CD4-positive, alpha-beta T cell (primary cell): ENCODE measurements at regions of chr5 and their contacts with region 1.

Region 1: DNA sequence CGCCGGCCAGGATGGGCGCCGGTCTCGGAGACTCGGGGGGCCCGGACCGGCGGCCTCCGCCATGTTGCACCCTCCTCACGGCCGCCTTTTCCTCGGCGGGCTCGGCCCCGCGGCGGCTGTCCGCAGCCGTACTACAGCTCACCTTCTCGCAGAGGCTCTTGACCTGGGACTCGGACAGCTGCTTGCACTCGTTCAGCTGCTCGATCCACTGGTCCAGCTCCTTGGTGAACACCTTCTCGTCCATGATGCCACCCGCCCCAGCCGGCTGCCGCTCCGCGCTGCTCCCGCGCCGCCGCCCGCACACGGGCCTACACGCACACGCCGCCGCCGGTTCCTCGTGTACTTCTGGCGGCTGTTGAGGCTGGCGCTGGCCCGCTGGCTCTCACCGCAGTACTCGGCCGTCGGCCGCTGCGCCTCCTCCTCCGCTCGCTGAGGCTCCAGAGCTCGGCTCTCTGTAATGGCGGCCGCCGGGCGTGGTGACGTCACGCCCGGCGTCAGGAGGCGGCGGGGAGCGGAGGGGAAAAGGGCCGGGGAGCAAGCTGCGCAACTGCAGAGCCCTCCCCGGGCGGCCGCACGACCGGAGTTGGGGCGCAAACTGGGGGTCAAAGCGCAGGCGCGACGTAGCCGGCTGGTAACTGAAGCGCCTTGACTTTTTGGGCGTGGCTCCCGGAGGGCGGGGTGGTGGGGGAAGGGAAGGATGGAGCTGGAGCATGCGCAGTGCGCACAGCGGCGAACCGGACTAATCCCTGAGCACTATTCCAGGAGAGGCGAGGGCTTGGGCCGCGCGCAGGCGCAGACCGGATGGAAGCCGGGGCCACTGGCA is at the start of gene PPP2CA:
- DNase-seq: peak; percentile 98 to 100 (median 99)
- ATAC-seq: peak; percentile 76
- H3K4me3 ChIP-seq: peak within 1 kb of the TSS; percentile 75
- H3K4me3 Mint-ChIP-seq: peak within 1 kb of the TSS; percentile 99
- H3K27ac ChIP-seq: peak within 1 kb of the TSS; percentile 100
- H3K27ac Mint-ChIP-seq: peak within 1 kb of the TSS; percentile 100
- H3K4me1 ChIP-seq: peaks cover 23% of the 10 kb centered on the region
- H3K4me1 Mint-ChIP-seq: peaks cover 65% of the 10 kb centered on the region
- H3K27me3 ChIP-seq: no peaks in the 10 kb centered on the region
- H3K27me3 Mint-ChIP-seq: no peaks in the 10 kb centered on the region
- CTCF ChIP-seq: no peak
- total RNA-seq, gene PPP2CA: 188 to 195 TPM

Region 2: DNA sequence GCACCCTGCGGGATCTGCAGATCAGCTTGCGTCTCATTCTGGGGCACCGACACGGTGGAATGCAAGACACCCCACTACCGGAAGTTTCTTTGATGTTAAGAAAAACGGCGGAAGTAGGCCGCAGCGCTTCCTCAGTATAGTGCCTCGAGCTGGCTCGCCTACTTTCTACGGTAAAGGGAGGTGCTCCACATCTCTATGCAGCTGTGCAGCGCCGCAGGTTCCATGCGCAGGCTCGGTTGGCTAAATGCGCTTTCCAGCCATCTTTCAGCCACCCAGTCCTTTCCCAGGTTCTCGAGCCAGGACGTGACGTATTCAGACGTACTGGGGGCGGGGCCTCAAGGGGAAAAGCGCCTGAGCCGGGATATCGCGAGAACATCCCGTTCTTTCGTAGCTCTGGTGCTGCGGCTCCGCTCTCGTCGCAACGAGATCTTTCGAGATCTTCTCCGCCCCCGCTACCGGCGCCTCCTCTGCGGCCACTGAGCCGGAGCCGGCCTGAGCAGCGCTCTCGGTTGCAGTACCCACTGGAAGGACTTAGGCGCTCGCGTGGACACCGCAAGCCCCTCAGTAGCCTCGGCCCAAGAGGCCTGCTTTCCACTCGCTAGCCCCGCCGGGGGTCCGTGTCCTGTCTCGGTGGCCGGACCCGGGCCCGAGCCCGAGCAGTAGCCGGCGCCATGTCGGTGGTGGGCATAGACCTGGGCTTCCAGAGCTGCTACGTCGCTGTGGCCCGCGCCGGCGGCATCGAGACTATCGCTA is 1174.1 kb before region 1 on chr5 and contains the start of gene HSPA4:
- CTCF ChIA-PET with region 1: no interaction called
- POLR2A ChIA-PET with region 1: interaction called, 4 read pairs
- intact Hi-C with region 1: loop called in 1 of 2 experiments (anchors 5 kb)
- DNase-seq: peak; percentile 93 to 100 (median 95)
- ATAC-seq: peak; percentile 88
- H3K4me3 ChIP-seq: peak within 1 kb of the TSS; percentile 98
- H3K4me3 Mint-ChIP-seq: peak within 1 kb of the TSS; percentile 100
- H3K27ac ChIP-seq: peak within 1 kb of the TSS; percentile 95 to 99
- H3K27ac Mint-ChIP-seq: peak within 1 kb of the TSS; percentile 100
- H3K4me1 ChIP-seq: peaks cover 40% of the 10 kb centered on the region
- H3K4me1 Mint-ChIP-seq: peaks cover 64% of the 10 kb centered on the region
- H3K27me3 ChIP-seq: no peaks in the 10 kb centered on the region
- H3K27me3 Mint-ChIP-seq: no peaks in the 10 kb centered on the region
- CTCF ChIP-seq: no peak
- total RNA-seq, gene HSPA4: 42.2 to 44.7 TPM

Region 3: DNA sequence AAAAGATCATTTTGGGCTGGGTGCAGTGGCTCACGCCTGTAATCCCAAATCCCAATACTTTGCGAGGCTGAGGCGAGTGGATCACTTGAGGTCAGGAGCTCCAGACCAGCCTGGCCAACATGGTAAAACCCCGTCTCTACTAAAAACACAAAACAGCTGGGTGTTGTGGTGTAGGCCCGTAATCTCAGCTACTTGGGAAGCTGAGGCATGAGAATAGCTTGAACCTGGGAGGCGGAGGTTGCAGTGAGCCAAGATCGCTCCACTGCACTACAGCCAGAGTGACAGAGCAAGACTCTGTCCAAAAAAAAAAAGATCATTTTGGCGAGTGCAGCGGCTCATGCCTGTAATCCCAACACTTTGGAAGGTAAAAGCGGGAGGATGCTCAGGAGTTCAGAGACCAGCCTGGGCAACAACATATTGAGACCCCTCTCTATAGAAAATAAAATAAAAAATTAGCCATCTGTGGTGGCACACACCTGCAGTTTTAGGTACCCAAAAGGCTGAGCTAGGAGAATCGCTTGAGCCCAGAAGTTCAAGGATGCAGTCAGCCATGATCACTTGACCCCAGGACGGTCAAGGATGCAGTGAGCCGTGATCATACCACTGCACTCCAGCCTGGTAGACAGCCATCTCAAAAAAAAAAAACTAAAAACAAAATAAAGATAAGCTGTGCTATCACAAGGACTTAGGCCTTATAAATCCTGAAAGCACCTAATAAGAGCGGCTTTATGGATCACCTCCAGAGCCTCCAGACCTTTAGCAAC is 16.2 kb before region 1 on chr5:
- CTCF ChIA-PET with region 1: interaction called, 3 read pairs
- POLR2A ChIA-PET with region 1: interaction called, 13 read pairs
- intact Hi-C with region 1: no loop called
- DNase-seq: no peak
- ATAC-seq: no peak
- H3K4me3 ChIP-seq: no peak overlapping the region
- H3K4me3 Mint-ChIP-seq: peak overlapping the region; percentile 15
- H3K27ac ChIP-seq: no peak overlapping the region
- H3K27ac Mint-ChIP-seq: no peak overlapping the region
- H3K4me1 ChIP-seq: peaks cover 45% of the 10 kb centered on the region
- H3K4me1 Mint-ChIP-seq: peaks cover 75% of the 10 kb centered on the region
- H3K27me3 ChIP-seq: no peaks in the 10 kb centered on the region
- H3K27me3 Mint-ChIP-seq: no peaks in the 10 kb centered on the region
- CTCF ChIP-seq: no peak

Region 4: DNA sequence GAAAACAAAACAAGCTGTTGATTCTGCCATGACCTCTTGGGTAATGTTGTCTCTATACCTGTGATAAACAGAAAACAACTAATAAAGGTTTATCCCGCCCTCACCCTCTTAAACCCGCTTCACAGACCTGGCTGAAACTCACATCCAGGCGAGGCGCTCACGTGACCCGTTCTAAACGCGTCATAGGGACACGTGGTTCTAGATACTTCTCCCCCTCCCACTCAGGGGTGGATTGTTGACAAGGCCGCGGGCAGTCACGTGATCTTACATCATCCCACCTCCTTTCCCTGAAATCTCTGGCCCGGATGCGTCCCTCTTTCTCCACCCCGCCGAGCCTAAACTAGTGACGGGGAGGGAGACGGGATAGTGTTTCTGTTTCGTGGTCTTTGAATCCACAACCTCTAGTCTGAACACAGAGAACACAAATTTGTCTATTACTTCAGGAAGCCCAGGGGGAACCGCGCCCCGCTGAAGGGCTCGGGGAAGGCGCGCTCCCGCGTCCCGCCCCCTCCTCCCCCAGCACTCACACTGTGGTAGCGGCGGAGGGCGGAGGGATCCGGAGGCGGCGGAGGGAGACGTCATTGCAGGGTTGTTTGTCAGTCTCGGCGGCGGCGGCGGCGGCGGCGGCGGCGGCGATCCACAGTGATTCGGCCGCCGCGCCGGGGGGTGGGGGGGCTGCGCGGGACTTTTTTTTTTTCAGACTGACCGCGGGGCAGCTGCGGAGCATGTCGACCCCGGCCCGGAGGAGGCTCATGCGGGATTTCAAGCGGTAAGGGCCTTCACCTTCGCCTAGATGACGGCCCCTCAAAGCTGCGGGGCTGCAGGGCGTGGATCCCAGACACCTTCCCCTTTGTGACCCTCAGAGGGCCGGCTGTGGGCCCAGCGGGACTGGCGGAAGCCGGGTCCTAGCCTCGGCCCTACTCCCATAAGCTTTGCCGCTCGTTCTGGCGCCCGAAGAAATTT is 145.3 kb after region 1 on chr5 and contains the start of gene UBE2B:
- CTCF ChIA-PET with region 1: no interaction called
- POLR2A ChIA-PET with region 1: interaction called, 33 read pairs
- intact Hi-C with region 1: loop called (anchors 1 to 5 kb)
- DNase-seq: peak; percentile 93 to 99 (median 97)
- ATAC-seq: peak; percentile 73
- H3K4me3 ChIP-seq: peak within 1 kb of the TSS; percentile 100
- H3K4me3 Mint-ChIP-seq: peak within 1 kb of the TSS; percentile 96
- H3K27ac ChIP-seq: peak within 1 kb of the TSS; percentile 97 to 98
- H3K27ac Mint-ChIP-seq: peak within 1 kb of the TSS; percentile 97
- H3K4me1 ChIP-seq: peaks cover 37% of the 10 kb centered on the region
- H3K4me1 Mint-ChIP-seq: peaks cover 68% of the 10 kb centered on the region
- H3K27me3 ChIP-seq: no peaks in the 10 kb centered on the region
- H3K27me3 Mint-ChIP-seq: peaks cover 4% of the 10 kb centered on the region
- CTCF ChIP-seq: no peak
- total RNA-seq, gene UBE2B: 225 to 228 TPM

Region 5: GRCh38 chr5:134648425-134649162 is 422.8 kb after region 1 on chr5 and contains the start of gene SEC24A:
- CTCF ChIA-PET with region 1: no interaction called
- POLR2A ChIA-PET with region 1: no interaction called
- intact Hi-C with region 1: loop called in 1 of 2 experiments (anchors 5 kb)
- DNase-seq: peak; percentile 74 to 98 (median 82)
- ATAC-seq: peak; percentile 78
- H3K4me3 ChIP-seq: peak within 1 kb of the TSS; percentile 80
- H3K4me3 Mint-ChIP-seq: peak within 1 kb of the TSS; percentile 99
- H3K27ac ChIP-seq: peak within 1 kb of the TSS; percentile 93 to 98
- H3K27ac Mint-ChIP-seq: peak within 1 kb of the TSS; percentile 95
- H3K4me1 ChIP-seq: peaks cover 27% of the 10 kb centered on the region
- H3K4me1 Mint-ChIP-seq: peaks cover 31% of the 10 kb centered on the region
- H3K27me3 ChIP-seq: no peaks in the 10 kb centered on the region
- H3K27me3 Mint-ChIP-seq: no peaks in the 10 kb centered on the region
- CTCF ChIP-seq: no peak
- total RNA-seq, gene SEC24A: 11.7 to 12.3 TPM

Region 6: GRCh38 chr5:134904630-134905245 is 678.9 kb after region 1 on chr5 and contains the start of gene PCBD2:
- CTCF ChIA-PET with region 1: no interaction called
- POLR2A ChIA-PET with region 1: interaction called, 18 read pairs
- intact Hi-C with region 1: no loop called
- DNase-seq: peak; percentile 83 to 96 (median 90)
- ATAC-seq: peak; percentile 85
- H3K4me3 ChIP-seq: peak within 1 kb of the TSS; percentile 87
- H3K4me3 Mint-ChIP-seq: peak within 1 kb of the TSS; percentile 99
- H3K27ac ChIP-seq: peak within 1 kb of the TSS; percentile 83 to 85
- H3K27ac Mint-ChIP-seq: peak within 1 kb of the TSS; percentile 95
- H3K4me1 ChIP-seq: peaks cover 22% of the 10 kb centered on the region
- H3K4me1 Mint-ChIP-seq: peaks cover 15% of the 10 kb centered on the region
- H3K27me3 ChIP-seq: no peaks in the 10 kb centered on the region
- H3K27me3 Mint-ChIP-seq: no peaks in the 10 kb centered on the region
- CTCF ChIP-seq: peak; percentile 81
- total RNA-seq, gene PCBD2: 5.2 to 5.8 TPM